ENCODE measurements at regions of chr17 and their contacts with region 1.

Region 1: DNA sequence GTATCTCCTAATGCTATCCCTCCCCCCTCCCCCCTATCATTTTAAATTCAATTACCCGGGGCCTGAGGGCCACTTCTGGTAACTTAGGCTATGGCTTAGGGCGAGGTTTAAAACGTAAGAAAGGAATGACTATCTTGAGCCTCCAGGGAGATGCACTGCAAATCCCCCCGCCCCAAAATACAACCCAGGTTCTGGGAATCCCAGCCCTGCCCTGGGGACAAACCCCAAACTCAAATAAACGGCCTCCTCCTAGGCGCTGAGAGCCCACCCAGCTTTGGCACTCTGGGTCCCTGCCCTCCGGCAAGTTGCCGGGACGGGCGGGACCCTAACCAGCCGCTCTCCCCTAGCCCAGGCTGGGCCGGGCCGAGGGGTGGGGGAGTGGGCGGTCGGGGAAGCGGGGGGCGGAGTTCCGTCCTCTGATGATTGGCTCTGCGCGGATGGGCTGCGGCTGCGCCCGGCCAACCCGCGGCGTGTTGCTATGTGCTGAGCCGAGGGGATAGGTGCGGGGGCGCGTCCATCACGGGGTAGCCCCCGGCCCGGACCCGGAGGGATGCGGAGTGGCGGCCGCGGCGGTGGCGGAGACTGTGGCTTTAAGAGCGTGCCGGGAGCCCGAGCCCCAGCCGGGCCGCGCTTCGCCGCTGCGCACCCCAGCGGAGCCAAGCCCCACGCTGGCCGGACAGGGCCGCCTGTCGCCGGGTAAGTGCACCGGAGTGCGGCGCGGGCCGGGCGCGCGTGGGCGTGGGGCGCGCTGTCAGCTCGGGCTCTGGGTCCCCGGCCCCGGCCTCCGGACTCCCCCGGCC is at the start of gene YPEL2:
- DNase-seq: peak; percentile 97 to 98
- ATAC-seq: peak; percentile 61 to 68
- H3K4me3 ChIP-seq: peak within 1 kb of the TSS; percentile 85 to 95 (median 89)
- H3K27ac ChIP-seq: peak within 1 kb of the TSS; percentile 96 to 98 (median 96)
- H3K4me1 ChIP-seq: peaks cover 55 to 64% of the 10 kb centered on the region in 2 donors
- H3K27me3 ChIP-seq: no peaks in the 10 kb centered on the region
- CTCF ChIP-seq: peak in 2 of 5 experiments; percentile 21 to 31
- POLR2A ChIP-seq: peak; percentile 89 to 98
- total RNA-seq, gene YPEL2: 18.9 to 27.4 (median 22.2) TPM

Region 2: GRCh38 chr17:59296771-59297500 is 34.4 kb before region 1 on chr17:
- in situ Hi-C with region 1: no loop called
- intact Hi-C with region 1: loop called (anchors 1 kb)
- DNase-seq: no peak
- ATAC-seq: no peak
- H3K4me3 ChIP-seq: no peak overlapping the region
- H3K27ac ChIP-seq: peak overlapping the region; percentile 72 to 85 (median 82)
- H3K4me1 ChIP-seq: peaks cover 22 to 34% of the 10 kb centered on the region in 2 donors
- H3K27me3 ChIP-seq: no peaks in the 10 kb centered on the region
- CTCF ChIP-seq: no peak
- POLR2A ChIP-seq: no peak

Region 3: DNA sequence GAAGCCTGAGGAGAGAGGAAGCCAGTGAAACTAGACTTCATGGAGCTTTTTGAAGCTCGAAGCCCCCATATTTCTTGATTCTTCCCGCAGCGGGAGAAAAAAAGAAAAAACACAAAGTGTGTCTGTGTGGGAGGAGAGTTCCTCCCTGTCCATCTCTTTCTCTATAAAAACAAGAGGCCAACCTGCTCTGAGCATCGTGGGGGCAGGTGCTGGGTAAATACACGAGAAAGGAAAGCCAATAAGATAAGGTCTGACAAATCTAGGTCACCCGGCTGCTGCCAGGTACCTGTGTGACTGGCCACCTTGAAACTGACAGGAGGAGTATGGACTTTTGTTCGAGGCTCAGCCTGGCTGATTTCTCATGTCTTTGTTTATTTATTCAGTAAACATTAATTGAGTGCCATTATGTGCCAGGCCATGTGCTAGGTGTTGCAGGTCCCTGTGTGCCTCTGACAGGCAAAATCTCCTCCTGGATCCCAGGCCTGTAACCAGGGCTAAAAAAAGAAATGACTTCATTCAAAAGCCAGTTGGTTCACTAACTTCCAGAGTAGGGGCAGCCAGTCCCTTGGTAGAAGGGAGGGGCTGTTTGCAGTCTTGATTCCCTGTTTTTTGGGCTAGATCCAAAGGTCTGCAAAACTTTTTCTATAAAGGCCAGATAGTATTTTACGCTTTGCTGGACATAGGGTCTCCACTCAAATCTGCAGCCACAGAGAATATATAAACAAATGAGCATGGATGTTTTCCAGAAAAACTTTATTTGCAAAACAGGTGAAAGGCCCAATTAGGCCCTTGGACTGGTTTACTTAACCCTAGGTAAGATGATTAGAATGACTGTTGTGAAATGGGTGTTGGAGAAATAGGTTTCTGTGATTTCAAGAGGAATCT is 35.7 kb after region 1 on chr17:
- in situ Hi-C with region 1: no loop called
- intact Hi-C with region 1: loop called (anchors 2 kb)
- DNase-seq: peak; percentile 63 to 77
- ATAC-seq: peak; percentile 65 to 72
- H3K4me3 ChIP-seq: peak overlapping the region in 2 of 4 donors; percentile 0 to 8
- H3K27ac ChIP-seq: peak overlapping the region; percentile 96 to 99 (median 98)
- H3K4me1 ChIP-seq: peaks cover 93 to 100% of the 10 kb centered on the region in 2 donors
- H3K27me3 ChIP-seq: no peaks in the 10 kb centered on the region
- CTCF ChIP-seq: no peak
- POLR2A ChIP-seq: peak; percentile 21 to 33

Region 4: GRCh38 chr17:59380474-59380873 is 49.1 kb after region 1 on chr17:
- in situ Hi-C with region 1: no loop called
- intact Hi-C with region 1: no loop called
- DNase-seq: no peak
- ATAC-seq: no peak
- H3K4me3 ChIP-seq: no peak overlapping the region
- H3K27ac ChIP-seq: peak overlapping the region; percentile 96 to 99 (median 98)
- H3K4me1 ChIP-seq: peaks cover 82% of the 10 kb centered on the region in 2 donors
- H3K27me3 ChIP-seq: no peaks in the 10 kb centered on the region
- CTCF ChIP-seq: no peak
- POLR2A ChIP-seq: no peak

Region 5: GRCh38 chr17:59427425-59427921 is 96.1 kb after region 1 on chr17:
- in situ Hi-C with region 1: no loop called
- intact Hi-C with region 1: loop called (anchors 5 kb)
- DNase-seq: no peak
- ATAC-seq: peak in 1 of 2 donors; percentile 9
- H3K4me3 ChIP-seq: no peak overlapping the region
- H3K27ac ChIP-seq: peak overlapping the region; percentile 91 to 98 (median 95)
- H3K4me1 ChIP-seq: peaks cover 62 to 71% of the 10 kb centered on the region in 2 donors
- H3K27me3 ChIP-seq: no peaks in the 10 kb centered on the region
- CTCF ChIP-seq: no peak
- POLR2A ChIP-seq: no peak

Region 6: GRCh38 chr17:59619293-59620063 is 288.1 kb after region 1 on chr17 and contains the start of gene CLTC:
- in situ Hi-C with region 1: no loop called
- intact Hi-C with region 1: loop called (anchors 5 kb)
- DNase-seq: peak; percentile 87 to 91
- ATAC-seq: peak; percentile 90 to 92
- H3K4me3 ChIP-seq: peak within 1 kb of the TSS; percentile 92 to 99 (median 95)
- H3K27ac ChIP-seq: peak within 1 kb of the TSS; percentile 97 to 99 (median 98)
- H3K4me1 ChIP-seq: peaks cover 45% of the 10 kb centered on the region in 2 donors
- H3K27me3 ChIP-seq: no peaks in the 10 kb centered on the region
- CTCF ChIP-seq: peak in 2 of 5 experiments; percentile 17 to 19
- POLR2A ChIP-seq: peak; percentile 93 to 97
- total RNA-seq, gene CLTC: 140 to 203 (median 172) TPM